CD8-positive, alpha-beta T cell (primary cell): ENCODE measurements at regions of chr14 and their contacts with region 1.

Region 1: DNA sequence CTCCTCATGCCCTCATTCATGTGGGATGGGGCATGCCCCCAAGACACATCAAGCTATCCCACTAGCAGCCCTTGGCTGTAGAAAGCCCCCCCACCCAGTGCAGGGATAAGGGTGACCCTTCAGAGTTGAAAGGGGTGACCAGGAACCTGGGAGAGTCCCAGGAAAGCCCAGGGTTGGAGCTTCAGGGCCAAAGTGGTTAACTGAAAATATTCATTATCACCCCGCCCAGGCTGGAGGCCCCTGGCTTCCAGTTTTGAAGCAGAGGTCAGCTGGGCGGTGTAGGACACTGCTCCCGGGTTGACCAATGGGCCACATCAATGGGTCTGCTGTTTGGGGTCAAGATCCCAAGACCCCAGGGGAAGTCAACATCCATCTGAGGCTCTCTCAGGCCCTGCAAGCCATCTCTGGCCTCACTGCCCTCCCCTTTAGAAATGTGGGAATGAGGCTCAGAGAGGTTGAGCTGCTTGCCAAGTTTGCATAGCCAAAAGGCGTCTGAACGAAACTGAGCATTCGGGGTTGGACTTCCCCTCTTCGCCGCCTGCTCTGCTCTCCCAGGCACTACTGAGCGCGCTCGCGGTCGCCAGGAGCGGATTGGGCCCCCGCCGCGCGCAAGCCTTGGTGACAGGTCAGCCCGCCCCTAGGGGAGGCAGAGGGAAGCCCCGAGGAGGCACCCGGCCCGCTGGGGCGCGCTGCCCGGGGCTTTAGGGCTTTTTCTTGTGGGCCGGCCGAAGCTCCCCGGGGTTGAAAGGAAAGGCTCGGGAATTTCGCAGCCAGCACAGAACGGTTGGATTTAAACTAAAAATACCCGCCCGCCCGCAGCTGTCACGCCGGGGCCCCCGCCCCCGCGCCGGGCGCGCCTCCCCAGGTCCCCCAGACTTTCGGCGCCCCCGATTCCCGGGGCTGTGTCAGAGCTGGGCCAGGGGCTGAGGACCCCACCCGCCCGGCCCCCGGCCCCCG is 576 bp downstream of the SYNE3 start:
- DNase-seq: peak; percentile 62 to 94 (median 84)
- ATAC-seq: peak; percentile 85
- H3K4me3 ChIP-seq: peak overlapping the region; percentile 65 to 79
- H3K4me3 Mint-ChIP-seq: peak overlapping the region; percentile 89
- H3K27ac ChIP-seq: peak overlapping the region; percentile 59 to 64
- H3K27ac Mint-ChIP-seq: peak overlapping the region; percentile 93
- H3K4me1 ChIP-seq: peaks cover 66% of the 10 kb centered on the region
- H3K4me1 Mint-ChIP-seq: peaks cover 70% of the 10 kb centered on the region
- H3K27me3 ChIP-seq: no peaks in the 10 kb centered on the region
- H3K27me3 Mint-ChIP-seq: no peaks in the 10 kb centered on the region
- CTCF ChIP-seq: peak; percentile 46

Region 2: DNA sequence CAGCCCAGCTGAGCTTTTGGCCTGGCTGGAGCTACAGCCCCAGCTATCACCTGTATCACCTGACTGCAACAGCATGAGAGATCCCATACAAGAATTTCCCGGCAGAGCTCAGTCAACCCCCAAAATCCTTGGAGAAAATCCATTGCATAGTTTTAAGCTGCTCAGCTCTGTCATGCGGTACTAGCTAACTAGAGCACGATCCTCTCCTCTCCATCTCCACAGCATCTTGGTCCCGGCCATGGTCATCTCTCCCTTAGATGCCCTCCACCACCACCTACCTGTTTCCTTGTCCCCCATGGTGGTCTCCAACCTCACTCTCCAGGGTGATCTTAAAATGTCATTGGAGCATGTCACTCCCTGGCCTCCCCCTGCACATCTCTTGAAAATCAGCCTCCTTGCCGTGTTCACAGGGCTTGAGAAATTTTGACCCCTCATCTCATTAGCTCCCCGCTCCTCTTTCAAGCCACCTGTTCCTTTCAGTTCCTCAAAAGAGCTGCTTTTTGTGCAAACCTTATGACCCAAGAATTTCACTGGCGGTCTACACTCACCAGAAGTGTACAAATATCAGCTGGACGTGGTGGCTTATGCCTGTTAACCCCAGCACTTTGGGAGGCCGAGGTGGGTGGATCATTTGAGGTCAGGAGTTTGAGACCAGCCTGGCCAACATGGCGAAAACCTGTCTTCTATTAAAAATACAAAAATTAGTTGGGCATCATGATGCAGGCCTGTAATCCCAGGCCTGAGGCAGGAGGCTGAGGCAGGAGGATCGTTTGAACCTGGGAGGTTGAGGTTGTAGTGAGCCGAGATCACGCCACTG is 188.1 kb before region 1 on chr14:
- CTCF ChIA-PET with region 1: no interaction called
- POLR2A ChIA-PET with region 1: no interaction called
- intact Hi-C with region 1: no loop called
- DNase-seq: peak in 1 of 9 experiments; percentile 18
- ATAC-seq: no peak
- H3K4me3 ChIP-seq: no peak overlapping the region
- H3K4me3 Mint-ChIP-seq: no peak overlapping the region
- H3K27ac ChIP-seq: no peak overlapping the region
- H3K27ac Mint-ChIP-seq: peak overlapping the region; percentile 53
- H3K4me1 ChIP-seq: no peaks in the 10 kb centered on the region
- H3K4me1 Mint-ChIP-seq: no peaks in the 10 kb centered on the region
- H3K27me3 ChIP-seq: no peaks in the 10 kb centered on the region
- H3K27me3 Mint-ChIP-seq: peaks cover 18% of the 10 kb centered on the region
- CTCF ChIP-seq: no peak

Region 3: DNA sequence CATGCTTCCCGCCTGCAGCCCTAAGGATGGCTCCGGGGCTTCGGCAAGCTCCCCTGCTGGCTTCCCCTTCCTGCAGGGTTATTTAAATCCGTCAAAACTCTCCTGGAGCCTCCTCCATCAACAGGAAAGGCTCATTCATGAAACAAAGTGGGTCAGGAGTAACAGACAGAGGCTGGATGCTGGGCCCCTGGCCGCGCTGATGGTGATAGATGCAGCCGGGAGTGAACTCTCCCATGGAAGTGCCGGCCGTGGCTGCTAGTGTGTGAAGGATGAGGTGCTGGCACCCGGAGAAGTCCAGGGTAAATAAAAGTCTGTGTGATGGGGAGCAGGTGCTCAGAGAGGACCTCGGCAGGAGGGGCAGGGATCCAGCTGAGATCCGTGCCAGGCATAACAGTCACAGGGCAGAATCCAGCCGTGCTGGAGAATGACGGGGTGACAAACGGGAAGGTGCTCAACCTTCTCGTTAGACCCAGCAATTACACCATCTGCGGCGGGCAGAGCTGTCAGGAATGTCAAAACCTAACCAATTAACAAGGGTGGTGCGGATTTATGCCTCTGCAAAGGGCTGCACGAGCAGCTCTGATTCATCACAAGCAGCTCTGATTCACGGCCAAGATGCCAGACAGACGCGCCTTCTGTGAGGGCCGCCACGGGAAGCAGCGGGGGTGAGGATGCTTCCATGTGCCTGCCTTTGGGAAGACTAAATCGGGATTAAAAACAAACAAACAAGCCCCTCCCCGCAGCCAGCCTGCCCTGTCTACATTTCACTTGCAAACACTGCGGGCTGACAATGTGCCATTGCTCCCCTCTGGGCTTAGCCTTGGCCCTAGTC is 55.0 kb before region 1 on chr14:
- CTCF ChIA-PET with region 1: interaction called, 532 read pairs
- POLR2A ChIA-PET with region 1: interaction called, 33 read pairs
- intact Hi-C with region 1: loop called (anchors 1 to 5 kb)
- DNase-seq: no peak
- ATAC-seq: no peak
- H3K4me3 ChIP-seq: no peak overlapping the region
- H3K4me3 Mint-ChIP-seq: no peak overlapping the region
- H3K27ac ChIP-seq: no peak overlapping the region
- H3K27ac Mint-ChIP-seq: peak overlapping the region; percentile 98
- H3K4me1 ChIP-seq: peaks cover 46% of the 10 kb centered on the region
- H3K4me1 Mint-ChIP-seq: peaks cover 48% of the 10 kb centered on the region
- H3K27me3 ChIP-seq: no peaks in the 10 kb centered on the region
- H3K27me3 Mint-ChIP-seq: no peaks in the 10 kb centered on the region
- CTCF ChIP-seq: no peak

Region 4: DNA sequence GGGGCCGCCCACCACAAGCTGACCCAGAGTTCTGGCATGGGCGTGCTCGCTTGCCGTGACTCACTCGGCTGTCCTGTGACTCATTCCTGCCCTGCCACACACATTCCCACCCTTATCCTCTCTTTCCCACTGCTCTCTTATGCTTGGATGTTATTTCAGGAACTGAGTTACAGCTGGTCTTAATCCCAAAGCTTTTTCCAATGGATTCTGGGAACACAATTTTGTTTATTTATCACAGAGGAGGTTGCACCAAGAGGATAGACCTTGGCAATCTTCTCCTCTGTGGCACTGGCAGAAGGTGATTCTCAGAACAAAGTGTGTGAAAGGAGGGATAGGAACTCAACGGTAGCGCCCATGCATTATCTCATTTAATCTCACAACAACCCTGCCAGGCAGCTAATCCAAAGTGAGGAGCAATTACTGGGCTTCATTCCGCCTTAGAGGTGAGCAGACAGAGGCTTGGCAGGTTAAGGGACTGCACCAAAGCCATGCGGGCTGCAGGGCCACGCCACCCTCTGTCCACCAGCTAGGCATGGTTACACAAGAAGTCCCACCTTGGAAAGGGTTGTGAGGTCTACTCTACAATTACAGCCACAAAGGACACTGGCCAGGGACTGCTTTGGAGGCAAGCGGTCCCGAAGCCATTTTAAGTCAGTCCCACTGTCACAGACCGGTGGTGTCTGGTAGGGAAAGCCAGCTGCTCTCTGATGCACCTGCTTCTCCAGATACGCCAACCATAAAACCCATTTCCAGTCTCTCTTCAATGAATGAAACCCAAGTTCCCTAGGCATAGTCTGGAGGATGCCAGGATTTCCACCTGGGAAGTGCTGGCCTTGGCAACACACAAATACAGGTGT is 32.3 kb before region 1 on chr14:
- CTCF ChIA-PET with region 1: no interaction called
- POLR2A ChIA-PET with region 1: no interaction called
- intact Hi-C with region 1: loop called in 1 of 2 experiments (anchors 5 kb)
- DNase-seq: no peak
- ATAC-seq: no peak
- H3K4me3 ChIP-seq: no peak overlapping the region
- H3K4me3 Mint-ChIP-seq: no peak overlapping the region
- H3K27ac ChIP-seq: no peak overlapping the region
- H3K27ac Mint-ChIP-seq: peak overlapping the region; percentile 19
- H3K4me1 ChIP-seq: peaks cover 19% of the 10 kb centered on the region
- H3K4me1 Mint-ChIP-seq: peaks cover 53% of the 10 kb centered on the region
- H3K27me3 ChIP-seq: no peaks in the 10 kb centered on the region
- H3K27me3 Mint-ChIP-seq: no peaks in the 10 kb centered on the region
- CTCF ChIP-seq: no peak